Body of pancreas (tissue), 4 donors: ENCODE measurements at regions of chr13 and their contacts with region 1.

Region 1: DNA sequence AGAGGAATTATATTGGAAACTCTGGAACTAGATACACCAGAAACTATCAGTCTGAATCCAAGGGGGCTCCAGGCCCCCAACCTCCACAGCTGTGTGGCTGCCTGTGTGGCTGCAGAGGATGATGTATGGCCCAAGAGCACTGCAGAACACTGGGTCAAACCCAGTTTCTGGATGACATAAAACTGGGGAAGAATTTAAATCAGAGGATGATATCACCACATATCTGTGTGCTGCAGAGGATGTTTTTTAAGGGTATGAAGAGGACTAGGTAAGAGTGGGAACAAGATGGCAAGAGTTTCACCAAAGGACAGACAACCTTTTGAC is 226.4 kb downstream of the SUCLA2 start:
- DNase-seq: no peak
- ATAC-seq: no peak
- H3K4me3 ChIP-seq: no peak overlapping the region
- H3K27ac ChIP-seq: no peak overlapping the region
- H3K4me1 ChIP-seq: no peaks in the 10 kb centered on the region
- H3K27me3 ChIP-seq: peaks cover 0 to 4% of the 10 kb centered on the region in 2 donors
- CTCF ChIP-seq: no peak
- POLR2A ChIP-seq: no peak

Region 2: DNA sequence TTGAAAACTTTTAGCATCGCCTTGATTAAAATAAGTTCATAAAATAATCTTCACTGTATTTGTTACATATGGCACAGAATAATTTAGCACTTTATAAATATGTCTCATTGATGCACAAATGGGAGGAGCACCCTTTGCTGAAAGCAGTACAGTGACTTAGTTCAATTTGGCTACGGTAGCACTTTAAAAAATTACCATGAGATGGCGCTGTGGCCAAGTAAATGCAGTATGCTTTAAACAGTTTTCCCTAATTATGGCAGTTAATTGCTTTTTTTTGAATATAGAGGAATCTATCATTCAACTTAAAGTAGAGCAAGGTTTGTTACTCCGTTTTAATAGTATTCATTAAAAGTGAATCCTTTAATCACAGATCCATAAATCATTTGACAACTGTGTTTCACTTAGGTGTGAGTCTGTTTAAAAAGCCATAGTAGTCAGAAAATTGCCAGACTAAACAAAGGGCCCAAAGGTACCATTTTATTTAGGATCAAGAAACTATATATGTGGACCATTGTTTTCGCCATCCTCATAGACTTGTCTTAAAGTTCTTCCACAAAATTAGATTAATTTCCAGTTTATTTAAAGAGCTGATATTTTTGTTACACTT is 942.9 kb before region 1 on chr13:
- intact Hi-C with region 1: loop called (anchors 5 kb)
- DNase-seq: peak in 3 of 4 donors; percentile 11 to 25 (median 16)
- ATAC-seq: no peak
- H3K4me3 ChIP-seq: no peak overlapping the region
- H3K27ac ChIP-seq: no peak overlapping the region
- H3K4me1 ChIP-seq: no peaks in the 10 kb centered on the region
- H3K27me3 ChIP-seq: no peaks in the 10 kb centered on the region
- CTCF ChIP-seq: peak; percentile 10 to 68 (median 57)
- POLR2A ChIP-seq: no peak

Region 3: GRCh38 chr13:46964789-46965527 is 809.7 kb before region 1 on chr13:
- intact Hi-C with region 1: no loop called
- DNase-seq: no peak
- ATAC-seq: no peak
- H3K4me3 ChIP-seq: no peak overlapping the region
- H3K27ac ChIP-seq: no peak overlapping the region
- H3K4me1 ChIP-seq: no peaks in the 10 kb centered on the region
- H3K27me3 ChIP-seq: no peaks in the 10 kb centered on the region
- CTCF ChIP-seq: no peak
- POLR2A ChIP-seq: no peak

Region 4: DNA sequence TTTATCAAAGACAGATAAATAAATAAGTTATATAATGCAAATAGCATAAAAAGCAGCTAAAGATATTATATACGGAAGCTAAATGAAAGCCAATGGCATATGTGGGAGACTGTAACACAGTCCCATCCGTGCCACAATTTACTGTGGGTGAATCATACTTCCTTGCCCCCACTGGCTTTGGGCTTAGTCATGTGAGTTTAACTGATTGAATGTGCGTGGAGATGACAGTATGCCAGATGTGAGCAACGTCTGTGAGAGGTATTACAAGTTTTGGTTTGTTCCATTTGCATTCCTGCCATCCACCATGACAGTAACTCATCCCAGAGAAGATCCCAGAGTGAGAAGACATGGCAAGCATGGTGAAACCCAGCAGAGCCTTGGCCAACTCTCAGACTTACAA is 113.6 kb before region 1 on chr13:
- intact Hi-C with region 1: no loop called
- DNase-seq: no peak
- ATAC-seq: no peak
- H3K4me3 ChIP-seq: no peak overlapping the region
- H3K27ac ChIP-seq: no peak overlapping the region
- H3K4me1 ChIP-seq: no peaks in the 10 kb centered on the region
- H3K27me3 ChIP-seq: no peaks in the 10 kb centered on the region
- CTCF ChIP-seq: no peak
- POLR2A ChIP-seq: no peak

Region 5: GRCh38 chr13:47990920-47991466 is 216.4 kb after region 1 on chr13:
- intact Hi-C with region 1: no loop called
- DNase-seq: no peak
- ATAC-seq: no peak
- H3K4me3 ChIP-seq: no peak overlapping the region
- H3K27ac ChIP-seq: no peak overlapping the region
- H3K4me1 ChIP-seq: no peaks in the 10 kb centered on the region
- H3K27me3 ChIP-seq: no peaks in the 10 kb centered on the region
- CTCF ChIP-seq: no peak
- POLR2A ChIP-seq: no peak